IMR-90 (cell line): ENCODE measurements at regions of chr3 and their contacts with region 1.

Region 1: GRCh38 chr3:49093853-49094767 is at the start of gene QRICH1:
- DNase-seq: peak; percentile 97
- ATAC-seq: peak; percentile 87
- H3K4me3 ChIP-seq: peak within 1 kb of the TSS; percentile 85
- H3K27ac ChIP-seq: peak within 1 kb of the TSS; percentile 82
- H3K4me1 ChIP-seq: peaks cover 2% of the 10 kb centered on the region; the same call in 1 of the 2 replicates
- H3K27me3 ChIP-seq: no peaks in the 10 kb centered on the region
- CTCF ChIP-seq: peak; percentile 71
- POLR2A ChIP-seq: peak; percentile 96
- RAD21 ChIP-seq: peak; percentile 68
- total RNA-seq, gene QRICH1: 62.7 and 72.2 TPM in 2 replicates

Region 2: DNA sequence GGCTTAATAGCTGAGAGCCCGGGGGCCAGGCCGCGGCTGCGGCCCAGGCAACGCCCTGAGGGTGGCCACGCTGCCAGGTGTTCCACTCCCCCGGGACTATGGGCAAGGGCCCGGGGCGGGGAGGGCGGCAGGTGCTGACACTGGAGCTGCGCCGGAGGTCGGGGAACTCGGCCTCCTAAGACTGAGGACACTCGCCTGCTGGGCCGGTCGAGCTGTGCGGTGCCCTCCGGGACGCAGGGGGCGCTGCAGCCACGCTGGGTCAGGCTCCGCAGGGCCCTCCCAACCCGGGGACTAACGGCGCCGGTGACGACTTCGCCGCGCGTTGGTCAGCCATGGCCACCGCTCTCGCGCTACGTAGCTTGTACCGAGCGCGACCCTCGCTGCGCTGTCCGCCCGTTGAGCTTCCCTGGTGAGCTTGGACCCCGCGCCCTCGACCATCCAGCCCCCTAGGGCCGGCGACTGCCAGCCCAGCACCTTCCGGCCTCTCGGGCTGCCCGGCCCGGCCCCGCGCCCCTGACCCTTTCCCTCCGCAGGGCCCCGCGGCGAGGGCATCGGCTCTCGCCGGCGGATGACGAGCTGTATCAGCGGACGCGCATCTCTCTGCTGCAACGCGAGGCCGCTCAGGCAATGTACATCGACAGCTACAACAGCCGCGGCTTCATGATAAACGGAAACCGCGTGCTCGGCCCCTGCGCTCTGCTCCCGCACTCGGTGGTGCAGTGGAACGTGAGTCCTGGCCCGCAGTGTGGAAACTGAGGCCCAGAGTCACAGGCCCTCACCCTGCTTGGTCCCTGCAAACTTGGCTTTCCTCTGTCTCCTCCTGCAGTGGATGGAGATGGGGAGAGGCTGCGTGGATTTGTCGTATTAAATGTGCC is 72.1 kb before region 1 on chr3 and contains the start of gene NDUFAF3:
- CTCF ChIA-PET with region 1: interaction called, 3 read pairs
- POLR2A ChIA-PET with region 1: interaction called, 25 read pairs
- dilution Hi-C with region 1: no loop called
- in situ Hi-C with region 1: no loop called
- intact Hi-C with region 1: loop called (anchors 5 kb)
- DNase-seq: peak; percentile 92
- ATAC-seq: peak; percentile 74
- H3K4me3 ChIP-seq: peak within 1 kb of the TSS; percentile 84
- H3K27ac ChIP-seq: peak within 1 kb of the TSS; percentile 93
- H3K4me1 ChIP-seq: peaks cover 10% of the 10 kb centered on the region
- H3K27me3 ChIP-seq: no peaks in the 10 kb centered on the region
- CTCF ChIP-seq: peak; percentile 96
- POLR2A ChIP-seq: peak; percentile 40; the same call in 1 of the 2 replicates
- RAD21 ChIP-seq: no peak
- total RNA-seq, gene NDUFAF3: 26.5 and 43.3 TPM in 2 replicates

Region 3: DNA sequence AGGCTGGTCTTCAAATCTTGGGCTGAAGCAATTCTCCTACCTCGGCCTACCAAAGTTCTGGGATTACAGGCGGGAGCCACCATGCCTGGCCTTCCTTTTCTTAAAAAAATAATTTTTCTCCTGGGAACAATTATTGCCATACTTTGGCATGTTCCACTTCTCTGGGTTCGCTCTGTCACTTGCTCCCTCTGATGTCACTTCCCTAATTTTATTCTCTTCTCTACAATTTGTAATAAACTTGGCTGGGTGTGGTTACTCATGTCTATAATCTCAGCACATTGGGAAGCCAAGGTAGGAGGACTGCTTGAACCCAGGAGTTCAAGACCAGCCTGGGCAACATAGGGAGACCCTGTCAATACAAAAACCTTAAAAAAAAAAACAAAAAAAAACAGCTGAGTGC is 58.8 kb before region 1 on chr3:
- CTCF ChIA-PET with region 1: no interaction called
- POLR2A ChIA-PET with region 1: no interaction called
- dilution Hi-C with region 1: no loop called
- in situ Hi-C with region 1: no loop called
- intact Hi-C with region 1: loop called (anchors 5 kb)
- DNase-seq: no peak
- ATAC-seq: no peak
- H3K4me3 ChIP-seq: no peak overlapping the region
- H3K27ac ChIP-seq: no peak overlapping the region
- H3K4me1 ChIP-seq: peaks cover 4% of the 10 kb centered on the region
- H3K27me3 ChIP-seq: no peaks in the 10 kb centered on the region
- CTCF ChIP-seq: no peak
- POLR2A ChIP-seq: no peak
- RAD21 ChIP-seq: no peak